Activated CD4-positive, alpha-beta memory T cell treated with anti-CD3 and anti-CD28 coated beads, Interleukin-2, amount 10 ng/mL, durations not matched to agents 7 days and 5 days (primary cell): ENCODE measurements at regions of chr19 and their contacts with region 1.

Region 1: DNA sequence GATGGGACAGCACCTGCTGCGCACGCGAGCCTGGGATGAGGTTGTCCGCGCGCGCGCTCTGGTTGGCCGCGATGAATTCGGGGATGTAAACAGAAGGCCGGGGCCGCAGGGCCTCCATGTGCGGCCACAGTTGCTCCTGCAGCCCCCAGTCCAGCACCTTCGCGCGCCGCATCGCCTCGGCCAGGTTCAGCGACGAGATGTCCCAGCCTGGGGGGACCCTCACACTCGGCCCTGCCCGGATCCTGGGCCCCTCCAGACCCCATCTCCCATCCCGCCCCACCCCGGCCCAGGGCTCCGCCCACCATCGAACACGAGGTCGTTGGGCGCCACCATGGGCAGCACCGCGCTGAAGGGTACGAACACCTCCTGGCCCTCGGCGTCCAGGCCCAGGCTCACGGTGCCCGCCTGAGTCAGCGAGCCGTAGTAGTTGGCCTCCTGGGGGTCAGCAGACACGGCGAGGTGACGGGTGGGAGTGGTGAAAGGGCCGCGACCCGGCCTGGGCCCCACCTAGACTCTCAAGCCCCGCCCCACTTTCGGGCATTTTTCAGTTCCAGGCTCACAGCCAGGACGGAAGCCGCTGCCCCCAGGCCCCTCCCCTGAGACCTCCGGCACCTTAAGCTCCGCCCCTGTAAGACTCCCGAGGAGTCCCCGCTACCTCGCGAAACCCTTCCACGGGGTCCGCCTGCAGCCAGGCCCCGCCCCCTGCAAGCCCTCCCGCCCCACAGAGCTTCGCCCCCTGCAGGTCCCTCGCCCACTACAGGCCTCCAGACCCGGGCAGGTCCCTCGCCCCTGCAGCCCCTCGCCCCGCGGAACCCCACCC is 1.1 kb downstream of the ISYNA1 start:
- DNase-seq: peak; percentile 70
- H3K4me3 Mint-ChIP-seq: peak overlapping the region; percentile 57
- H3K27ac Mint-ChIP-seq: no peak overlapping the region
- H3K4me1 Mint-ChIP-seq: peaks cover 37% of the 10 kb centered on the region
- H3K27me3 Mint-ChIP-seq: no peaks in the 10 kb centered on the region

Region 2: GRCh38 chr19:18401580-18402112 is 35.2 kb before region 1 on chr19:
- CTCF ChIA-PET with region 1: no interaction called
- POLR2A ChIA-PET with region 1: no interaction called
- DNase-seq: no peak
- H3K4me3 Mint-ChIP-seq: no peak overlapping the region
- H3K27ac Mint-ChIP-seq: no peak overlapping the region
- H3K4me1 Mint-ChIP-seq: peaks cover 16% of the 10 kb centered on the region
- H3K27me3 Mint-ChIP-seq: peaks cover 15% of the 10 kb centered on the region

Region 3: DNA sequence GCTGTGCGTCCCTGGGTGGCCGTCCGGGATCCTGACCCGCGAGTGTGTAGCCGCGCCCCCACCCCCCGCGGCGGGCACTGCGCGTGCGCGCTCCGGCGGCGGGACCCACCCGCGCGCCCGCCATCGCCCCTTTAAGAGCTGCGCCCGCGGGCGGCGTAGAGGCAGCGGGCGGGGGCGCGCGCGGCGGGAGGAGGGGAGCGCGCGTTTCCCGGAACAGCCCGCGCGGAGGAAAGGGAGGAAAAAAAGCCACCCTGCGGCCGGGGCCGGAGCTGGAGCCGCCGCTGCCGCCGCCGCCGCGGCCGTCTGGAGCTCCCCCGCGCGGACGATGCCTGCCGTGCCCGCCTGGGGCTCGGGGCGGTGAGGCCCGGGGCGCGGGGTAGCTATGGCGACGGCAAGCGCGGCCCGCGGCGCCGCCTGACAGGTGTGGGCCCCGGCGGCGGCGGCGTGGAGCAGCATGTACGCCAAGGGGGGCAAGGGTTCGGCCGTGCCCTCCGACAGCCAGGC is 17.6 kb before region 1 on chr19 and contains the start of gene SSBP4:
- CTCF ChIA-PET with region 1: interaction called, 3 read pairs
- POLR2A ChIA-PET with region 1: interaction called, 17 read pairs
- DNase-seq: peak; percentile 79
- H3K4me3 Mint-ChIP-seq: peak within 1 kb of the TSS; percentile 94
- H3K27ac Mint-ChIP-seq: peak within 1 kb of the TSS; percentile 91
- H3K4me1 Mint-ChIP-seq: peaks cover 84% of the 10 kb centered on the region
- H3K27me3 Mint-ChIP-seq: peaks cover 11% of the 10 kb centered on the region
- total RNA-seq, gene SSBP4: 140 to 153 TPM